PC-3 (cell line): ENCODE measurements at regions of chr12 and their contacts with region 1.

Region 1: GRCh38 chr12:56636675-56637540 is 6.8 kb upstream of the BAZ2A start:
- DNase-seq: peak; percentile 98
- ATAC-seq: peak; percentile 63
- H3K4me3 ChIP-seq: peak overlapping the region; percentile 90
- H3K27ac ChIP-seq: peak overlapping the region; percentile 83
- H3K4me1 ChIP-seq: peaks cover 36% of the 10 kb centered on the region
- H3K27me3 ChIP-seq: no peaks in the 10 kb centered on the region
- CTCF ChIP-seq: peak; percentile 81

Region 2: DNA sequence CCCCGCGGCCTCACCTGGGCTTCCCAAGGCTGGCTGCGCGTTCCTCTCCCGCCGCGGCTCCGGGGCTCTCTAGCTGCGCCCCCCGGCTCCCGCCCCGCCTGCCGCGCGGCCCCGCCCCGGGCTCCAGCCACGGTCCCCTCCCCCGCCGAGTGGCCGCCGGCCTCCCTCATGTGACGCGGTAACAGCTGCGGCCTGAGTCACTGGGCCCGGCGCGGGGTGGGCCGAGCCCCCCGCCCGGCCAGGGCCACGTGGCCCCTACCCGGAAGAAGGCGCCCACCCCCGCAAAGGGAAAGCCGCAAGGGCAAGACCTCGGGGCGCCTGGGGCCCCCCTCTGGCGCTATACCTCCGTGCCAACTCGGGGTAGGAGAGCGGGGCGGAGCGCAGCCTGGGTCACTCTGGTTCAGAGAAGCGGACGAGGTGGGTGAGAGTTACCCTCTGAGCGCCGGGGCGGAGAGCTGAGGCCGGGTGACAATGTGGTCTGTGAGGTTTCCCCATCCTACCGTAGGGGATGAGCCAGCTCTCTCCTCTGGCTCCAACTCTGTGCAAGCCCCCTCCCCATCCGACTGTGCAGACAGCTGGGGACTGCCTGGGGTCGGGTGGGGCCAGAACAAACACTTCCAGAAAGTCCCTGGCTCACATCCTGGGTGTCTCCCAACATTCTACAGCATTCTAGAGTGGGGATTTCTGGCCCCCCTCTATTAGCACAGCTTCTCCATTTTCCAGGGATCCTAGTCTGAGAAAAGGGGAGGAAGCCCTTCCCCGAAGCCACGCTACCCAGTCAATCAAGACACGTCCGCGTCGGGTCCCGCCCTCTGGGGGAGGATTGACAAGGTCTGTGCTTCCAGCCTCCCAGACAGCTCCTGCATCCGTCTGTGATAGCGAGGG is 907.7 kb before region 1 on chr12 and contains the start of gene CD63:
- CTCF ChIA-PET with region 1: no interaction called
- POLR2A ChIA-PET with region 1: interaction called, 14 read pairs
- intact Hi-C with region 1: no loop called
- DNase-seq: peak; percentile 93
- ATAC-seq: peak; percentile 70
- H3K4me3 ChIP-seq: peak within 1 kb of the TSS; percentile 88
- H3K27ac ChIP-seq: peak within 1 kb of the TSS; percentile 98
- H3K4me1 ChIP-seq: peaks cover 26% of the 10 kb centered on the region
- H3K27me3 ChIP-seq: no peaks in the 10 kb centered on the region
- CTCF ChIP-seq: no peak
- total RNA-seq, gene CD63: 784 and 869 TPM in 2 replicates

Region 3: GRCh38 chr12:56581418-56582145 is 55.3 kb before region 1 on chr12:
- CTCF ChIA-PET with region 1: interaction called, 11 read pairs
- POLR2A ChIA-PET with region 1: no interaction called
- intact Hi-C with region 1: no loop called
- DNase-seq: peak; percentile 78
- ATAC-seq: peak; percentile 81
- H3K4me3 ChIP-seq: no peak overlapping the region
- H3K27ac ChIP-seq: peak overlapping the region; percentile 50
- H3K4me1 ChIP-seq: peaks cover 22% of the 10 kb centered on the region
- H3K27me3 ChIP-seq: no peaks in the 10 kb centered on the region
- CTCF ChIP-seq: no peak

Region 4: GRCh38 chr12:56614627-56615026 is 22.3 kb before region 1 on chr12:
- CTCF ChIA-PET with region 1: no interaction called
- POLR2A ChIA-PET with region 1: no interaction called
- intact Hi-C with region 1: no loop called
- DNase-seq: no peak
- ATAC-seq: no peak
- H3K4me3 ChIP-seq: no peak overlapping the region
- H3K27ac ChIP-seq: no peak overlapping the region
- H3K4me1 ChIP-seq: no peaks in the 10 kb centered on the region
- H3K27me3 ChIP-seq: no peaks in the 10 kb centered on the region
- CTCF ChIP-seq: no peak

Region 5: GRCh38 chr12:56688129-56688845 is 51.4 kb after region 1 on chr12 and contains the start of gene PTGES3:
- CTCF ChIA-PET with region 1: interaction called, 15 read pairs
- POLR2A ChIA-PET with region 1: interaction called, 4 read pairs
- intact Hi-C with region 1: loop called (anchors 1 kb)
- DNase-seq: peak; percentile 98
- ATAC-seq: peak; percentile 82
- H3K4me3 ChIP-seq: peak within 1 kb of the TSS; percentile 95
- H3K27ac ChIP-seq: peak within 1 kb of the TSS; percentile 87
- H3K4me1 ChIP-seq: peaks cover 10% of the 10 kb centered on the region
- H3K27me3 ChIP-seq: no peaks in the 10 kb centered on the region
- CTCF ChIP-seq: no peak
- total RNA-seq, gene PTGES3: 165 and 172 TPM in 2 replicates

Region 6: DNA sequence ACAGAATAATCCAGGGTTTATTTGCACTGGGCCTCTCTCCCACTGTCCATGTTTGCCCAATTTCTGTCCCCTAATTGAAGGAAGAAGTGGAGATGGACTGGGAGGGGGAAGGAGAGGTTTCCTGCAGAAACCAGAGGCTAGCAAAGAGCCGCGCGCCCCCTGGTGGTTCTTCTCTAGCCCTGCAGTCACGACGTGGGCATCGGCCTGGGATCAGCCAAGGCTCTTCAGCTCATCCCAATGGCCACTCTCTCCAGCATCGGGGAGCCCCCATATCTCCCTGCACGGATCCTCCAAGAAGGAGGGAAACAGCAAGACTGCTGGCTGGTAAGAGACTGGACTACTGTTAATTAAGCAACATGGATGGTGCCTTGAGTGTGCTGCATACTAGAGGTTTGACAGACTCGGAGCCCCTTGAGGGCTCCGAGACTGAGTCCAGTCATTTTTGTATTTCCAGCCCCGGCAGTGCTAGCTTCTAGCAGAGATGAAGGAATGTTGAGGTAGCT is 350.7 kb after region 1 on chr12:
- CTCF ChIA-PET with region 1: interaction called, 3 read pairs
- POLR2A ChIA-PET with region 1: no interaction called
- intact Hi-C with region 1: loop called (anchors 2 kb)
- DNase-seq: peak; percentile 85
- ATAC-seq: peak; percentile 45
- H3K4me3 ChIP-seq: no peak overlapping the region
- H3K27ac ChIP-seq: no peak overlapping the region
- H3K4me1 ChIP-seq: peaks cover 17% of the 10 kb centered on the region
- H3K27me3 ChIP-seq: no peaks in the 10 kb centered on the region
- CTCF ChIP-seq: peak; percentile 94